Activated T-helper 1 cell treated with anti-CD3 and anti-CD28 coated beads, Interleukin-12 subunit alpha, Interleukin-12 subunit beta, Interleukin-2, Interleukin-4 antibody, amounts not matched to agents 30 ng/mL and 10 ng/mL and 1 ng/mL, durations not matched to agents 14 hours and 24 hours and 36 hours (primary cell): ENCODE measurements at regions of chr5 and their contacts with region 1.

Region 1: GRCh38 chr5:115169487-115170133 is at the start of gene TRIM36:
- DNase-seq: peak; percentile 90
- H3K4me3 Mint-ChIP-seq: peak within 1 kb of the TSS; percentile 82
- H3K27ac Mint-ChIP-seq: peak within 1 kb of the TSS; percentile 37
- H3K4me1 Mint-ChIP-seq: peaks cover 6% of the 10 kb centered on the region
- H3K27me3 Mint-ChIP-seq: peaks cover 60% of the 10 kb centered on the region
- total RNA-seq, gene TRIM36: not detected in 2 replicates

Region 2: GRCh38 chr5:115181757-115182156 is 12.1 kb after region 1 on chr5:
- intact Hi-C with region 1: loop called (anchors 1 kb)
- DNase-seq: no peak
- H3K4me3 Mint-ChIP-seq: no peak overlapping the region
- H3K27ac Mint-ChIP-seq: no peak overlapping the region
- H3K4me1 Mint-ChIP-seq: peaks cover 10% of the 10 kb centered on the region
- H3K27me3 Mint-ChIP-seq: peaks cover 78% of the 10 kb centered on the region

Region 3: GRCh38 chr5:115246361-115246991 is 76.9 kb after region 1 on chr5:
- intact Hi-C with region 1: loop called (anchors 2 kb)
- DNase-seq: no peak
- H3K4me3 Mint-ChIP-seq: no peak overlapping the region
- H3K27ac Mint-ChIP-seq: no peak overlapping the region
- H3K4me1 Mint-ChIP-seq: peaks cover 14% of the 10 kb centered on the region
- H3K27me3 Mint-ChIP-seq: no peaks in the 10 kb centered on the region

Region 4: DNA sequence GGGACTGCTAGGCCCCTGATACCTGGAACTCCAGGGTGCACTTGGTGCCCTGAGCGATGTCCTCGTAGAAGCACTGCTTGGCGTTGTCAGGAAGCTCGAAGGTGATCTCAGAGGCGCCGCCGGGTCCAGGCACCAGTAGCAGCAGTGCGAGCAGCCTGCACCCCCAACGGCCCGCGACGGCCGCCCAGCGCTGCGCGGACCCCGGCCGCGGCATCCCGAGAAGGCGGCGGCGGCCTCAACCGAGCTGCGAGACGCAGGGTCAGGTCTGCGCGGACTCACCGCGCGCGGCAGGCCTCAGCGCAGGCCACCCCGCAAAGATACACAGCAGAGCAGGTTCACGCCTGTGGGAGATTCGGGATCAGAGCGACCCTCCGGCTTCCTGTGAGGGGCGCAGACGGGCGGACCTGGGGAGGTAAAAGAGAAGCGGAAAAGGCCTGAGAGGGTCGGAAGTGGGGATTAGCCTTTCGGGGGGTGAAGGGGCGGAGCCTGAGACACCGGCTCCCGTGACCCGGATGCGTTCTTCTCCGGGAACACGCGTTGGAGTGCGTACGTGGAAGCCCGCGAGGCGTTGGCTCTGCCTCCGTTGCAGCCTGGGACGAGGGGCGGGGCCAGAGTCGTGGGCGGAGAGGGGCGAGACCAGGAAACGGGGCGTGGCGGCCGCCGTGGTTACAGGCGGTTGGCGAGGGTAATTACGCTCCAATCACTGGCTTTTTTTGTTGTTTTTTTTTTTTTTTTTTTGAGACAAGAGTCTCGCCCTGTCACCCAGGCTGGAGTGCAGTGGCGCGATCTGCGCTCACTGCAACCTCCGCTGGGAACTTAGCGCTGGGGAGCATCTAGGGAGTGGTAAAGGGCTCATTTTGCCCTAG is 456.2 kb after region 1 on chr5 and contains the start of gene TMED7:
- intact Hi-C with region 1: loop called (anchors 5 kb)
- DNase-seq: peak; percentile 99
- H3K4me3 Mint-ChIP-seq: no peak within 1 kb of the TSS
- H3K27ac Mint-ChIP-seq: peak within 1 kb of the TSS; percentile 88
- H3K4me1 Mint-ChIP-seq: peaks cover 32% of the 10 kb centered on the region
- H3K27me3 Mint-ChIP-seq: peaks cover 12% of the 10 kb centered on the region
- total RNA-seq, gene TMED7: 43.4 and 44.0 TPM in 2 replicates